ENCODE measurements at regions of chr4 and their contacts with region 1.

Region 1: DNA sequence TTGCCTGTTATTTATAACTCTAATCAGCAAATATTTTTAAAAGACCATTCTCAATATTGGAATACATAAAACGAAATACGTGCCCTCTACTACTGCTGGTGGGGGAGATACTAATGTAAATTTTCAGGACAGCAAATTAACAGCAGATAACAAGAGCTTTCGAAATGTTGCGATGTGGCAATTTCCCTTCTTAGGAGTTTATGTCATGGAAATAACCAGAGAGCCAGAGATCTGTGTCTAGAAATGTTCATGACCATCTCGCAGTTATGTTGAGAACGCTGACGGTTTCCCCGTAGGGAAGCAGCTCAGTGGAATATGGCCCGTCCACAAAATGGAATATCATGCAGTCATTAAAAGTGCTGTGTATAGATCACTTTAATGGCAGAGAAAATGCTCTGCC is 238.4 kb upstream of the PSAPL1 start:
- DNase-seq: no peak
- H3K4me3 ChIP-seq: no peak overlapping the region
- H3K27ac ChIP-seq: no peak overlapping the region
- H3K4me1 ChIP-seq: no peaks in the 10 kb centered on the region
- H3K27me3 ChIP-seq: no peaks in the 10 kb centered on the region
- CTCF ChIP-seq: no peak

Region 2: GRCh38 chr4:7101692-7102515 is 571.2 kb before region 1 on chr4:
- CTCF ChIA-PET with region 1: no interaction called
- POLR2A ChIA-PET with region 1: interaction called, 20 read pairs
- intact Hi-C with region 1: no loop called
- DNase-seq: peak; percentile 46 to 62
- H3K4me3 ChIP-seq: peak overlapping the region; percentile 35; the same call in 1 of the 2 replicates
- H3K27ac ChIP-seq: no peak overlapping the region
- H3K4me1 ChIP-seq: peaks cover 13% of the 10 kb centered on the region
- H3K27me3 ChIP-seq: peaks cover 6% of the 10 kb centered on the region; the same call in 1 of the 2 replicates
- CTCF ChIP-seq: peak; percentile 64

Region 3: GRCh38 chr4:7214359-7214758 is 458.8 kb before region 1 on chr4:
- CTCF ChIA-PET with region 1: no interaction called
- POLR2A ChIA-PET with region 1: interaction called, 38 read pairs
- intact Hi-C with region 1: no loop called
- DNase-seq: no peak
- H3K4me3 ChIP-seq: no peak overlapping the region
- H3K27ac ChIP-seq: peak overlapping the region; percentile 90
- H3K4me1 ChIP-seq: peaks cover 67% of the 10 kb centered on the region
- H3K27me3 ChIP-seq: no peaks in the 10 kb centered on the region
- CTCF ChIP-seq: no peak